ENCODE measurements at regions of chr6 and their contacts with region 1.

Region 1: GRCh38 chr6:88982720-88983119 is 19.3 kb upstream of the RNGTT start:
- DNase-seq: no peak
- ATAC-seq: peak; percentile 93

Region 2: DNA sequence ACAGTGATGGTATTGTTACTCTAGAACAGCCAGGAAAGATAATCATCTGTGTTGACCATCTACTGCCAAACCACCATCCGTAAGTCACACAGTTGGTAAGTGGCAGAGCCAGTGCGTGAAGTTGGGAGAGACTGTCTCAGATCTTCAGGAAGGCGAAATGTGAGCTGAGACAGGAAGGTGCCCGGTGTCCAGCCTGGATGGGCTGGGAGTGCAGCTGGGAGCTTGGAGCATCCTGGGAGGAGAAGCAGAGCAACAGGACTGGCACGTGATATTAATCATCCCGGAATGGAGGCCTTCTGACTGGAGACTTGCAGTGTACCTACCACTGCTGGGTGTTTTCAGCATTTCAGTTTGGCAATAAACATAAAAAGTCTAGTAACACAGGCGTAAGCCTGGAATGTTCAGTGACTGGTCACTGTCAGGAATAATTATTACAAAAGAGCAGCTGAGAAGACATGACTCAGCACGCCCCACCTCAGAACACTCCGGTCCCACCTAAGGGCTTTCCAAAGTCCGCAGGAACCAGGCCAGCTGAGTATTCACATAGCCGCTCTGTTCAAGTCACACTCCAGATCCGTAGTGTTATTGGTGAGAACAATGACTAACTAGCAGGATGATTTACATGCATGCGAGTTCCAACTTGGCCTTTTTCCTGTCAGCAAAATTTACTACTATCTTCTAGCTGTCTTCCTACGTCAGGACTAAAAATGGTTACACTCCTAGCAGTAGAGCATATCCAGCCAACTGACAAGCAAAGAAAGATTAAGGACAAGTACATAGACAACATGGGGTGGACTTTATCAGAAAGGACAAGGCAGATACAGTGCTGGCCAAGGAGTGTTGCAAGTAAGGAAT is 52.8 kb after region 1 on chr6:
- intact Hi-C with region 1: loop called (anchors 2 kb)
- DNase-seq: peak; percentile 81
- ATAC-seq: peak; percentile 96

Region 3: GRCh38 chr6:89080542-89081422 is 98.1 kb after region 1 on chr6 and contains the start of gene PNRC1:
- intact Hi-C with region 1: loop called (anchors 2 kb)
- DNase-seq: peak; percentile 100
- ATAC-seq: peak; percentile 93
- total RNA-seq, gene PNRC1: 139 TPM

Region 4: GRCh38 chr6:89117211-89118108 is 134.7 kb after region 1 on chr6 and contains the start of gene SRSF12:
- intact Hi-C with region 1: loop called (anchors 5 kb)
- DNase-seq: peak; percentile 85
- ATAC-seq: peak; percentile 82
- total RNA-seq, gene SRSF12: 0.24 TPM

Region 5: GRCh38 chr6:89242574-89243330 is 260.0 kb after region 1 on chr6:
- intact Hi-C with region 1: loop called (anchors 2 kb)
- DNase-seq: no peak
- ATAC-seq: no peak

Region 6: DNA sequence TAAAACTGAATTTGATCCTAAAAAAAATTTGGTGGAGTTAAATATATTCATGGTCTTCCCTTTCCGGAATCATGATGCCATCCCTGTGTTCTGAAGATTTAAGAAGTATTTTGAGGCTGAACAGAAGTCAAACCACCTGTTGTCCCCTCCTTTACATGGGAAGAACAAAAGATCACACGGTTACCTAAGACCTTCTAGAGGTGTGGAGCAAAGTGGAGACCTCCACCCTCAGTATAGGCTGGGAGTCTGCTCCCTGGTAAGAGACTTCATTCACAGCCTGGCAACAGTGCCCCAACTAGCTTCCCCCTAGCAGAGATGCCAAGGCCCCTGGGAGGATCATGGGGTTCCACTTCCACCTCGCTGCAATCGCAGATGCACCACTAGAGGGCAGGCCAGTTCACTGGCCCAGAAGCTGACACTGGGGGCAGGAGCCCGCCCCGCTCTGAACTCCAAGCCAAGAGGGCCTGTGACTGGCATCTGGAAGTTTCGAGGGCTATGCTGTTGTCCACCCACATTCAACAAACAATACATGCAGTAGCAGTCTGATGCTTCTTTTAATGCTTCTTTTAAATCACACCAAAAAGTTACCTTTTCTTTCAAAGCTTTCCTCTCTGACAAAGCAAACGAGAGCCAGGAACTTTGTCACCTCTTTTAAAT is 389.3 kb after region 1 on chr6:
- intact Hi-C with region 1: loop called (anchors 5 kb)
- DNase-seq: peak; percentile 90
- ATAC-seq: peak; percentile 88